CD4-positive, alpha-beta T cell (primary cell): ENCODE measurements at regions of chr16 and their contacts with region 1.

Region 1: GRCh38 chr16:67892899-67893742 is at the start of gene PSKH1:
- DNase-seq: peak; percentile 87 to 98 (median 92)
- ATAC-seq: peak; percentile 98
- H3K4me3 ChIP-seq: peak within 1 kb of the TSS; percentile 83
- H3K4me3 Mint-ChIP-seq: peak within 1 kb of the TSS; percentile 98
- H3K27ac ChIP-seq: peak within 1 kb of the TSS; percentile 82 to 83
- H3K27ac Mint-ChIP-seq: peak within 1 kb of the TSS; percentile 94
- H3K4me1 ChIP-seq: peaks cover 29% of the 10 kb centered on the region
- H3K4me1 Mint-ChIP-seq: peaks cover 37% of the 10 kb centered on the region
- H3K27me3 ChIP-seq: no peaks in the 10 kb centered on the region
- H3K27me3 Mint-ChIP-seq: no peaks in the 10 kb centered on the region
- CTCF ChIP-seq: no peak
- total RNA-seq, gene PSKH1: 11.4 to 13.3 TPM

Region 2: GRCh38 chr16:67841764-67842508 is 51.2 kb before region 1 on chr16 and contains the start of gene THAP11:
- CTCF ChIA-PET with region 1: no interaction called
- POLR2A ChIA-PET with region 1: interaction called, 3 read pairs
- intact Hi-C with region 1: loop called (anchors 2 to 5 kb)
- DNase-seq: peak; percentile 90 to 97 (median 94)
- ATAC-seq: peak; percentile 55
- H3K4me3 ChIP-seq: peak within 1 kb of the TSS; percentile 96
- H3K4me3 Mint-ChIP-seq: peak within 1 kb of the TSS; percentile 98
- H3K27ac ChIP-seq: peak within 1 kb of the TSS; percentile 87 to 99
- H3K27ac Mint-ChIP-seq: peak within 1 kb of the TSS; percentile 95
- H3K4me1 ChIP-seq: peaks cover 50% of the 10 kb centered on the region
- H3K4me1 Mint-ChIP-seq: peaks cover 42% of the 10 kb centered on the region
- H3K27me3 ChIP-seq: no peaks in the 10 kb centered on the region
- H3K27me3 Mint-ChIP-seq: no peaks in the 10 kb centered on the region
- CTCF ChIP-seq: peak; percentile 85
- total RNA-seq, gene THAP11: 31.2 to 32.1 TPM

Region 3: GRCh38 chr16:67855491-67856188 is 37.5 kb before region 1 on chr16:
- CTCF ChIA-PET with region 1: no interaction called
- POLR2A ChIA-PET with region 1: no interaction called
- intact Hi-C with region 1: no loop called
- DNase-seq: no peak
- ATAC-seq: no peak
- H3K4me3 ChIP-seq: no peak overlapping the region
- H3K4me3 Mint-ChIP-seq: no peak overlapping the region
- H3K27ac ChIP-seq: no peak overlapping the region
- H3K27ac Mint-ChIP-seq: peak overlapping the region; percentile 47
- H3K4me1 ChIP-seq: peaks cover 31% of the 10 kb centered on the region
- H3K4me1 Mint-ChIP-seq: peaks cover 31% of the 10 kb centered on the region
- H3K27me3 ChIP-seq: no peaks in the 10 kb centered on the region
- H3K27me3 Mint-ChIP-seq: no peaks in the 10 kb centered on the region
- CTCF ChIP-seq: no peak

Region 4: GRCh38 chr16:67993189-67994039 is 100.3 kb after region 1 on chr16:
- CTCF ChIA-PET with region 1: no interaction called
- POLR2A ChIA-PET with region 1: no interaction called
- intact Hi-C with region 1: no loop called
- DNase-seq: peak; percentile 69 to 93 (median 78)
- ATAC-seq: peak; percentile 91
- H3K4me3 ChIP-seq: peak overlapping the region; percentile 63
- H3K4me3 Mint-ChIP-seq: peak overlapping the region; percentile 89
- H3K27ac ChIP-seq: peak overlapping the region; percentile 76 to 90
- H3K27ac Mint-ChIP-seq: peak overlapping the region; percentile 93
- H3K4me1 ChIP-seq: peaks cover 55% of the 10 kb centered on the region
- H3K4me1 Mint-ChIP-seq: peaks cover 36% of the 10 kb centered on the region
- H3K27me3 ChIP-seq: no peaks in the 10 kb centered on the region
- H3K27me3 Mint-ChIP-seq: no peaks in the 10 kb centered on the region
- CTCF ChIP-seq: peak; percentile 92